Activated CD4-positive, alpha-beta memory T cell treated with anti-CD3 and anti-CD28 coated beads for 36 hours (primary cell): ENCODE measurements at regions of chr2 and their contacts with region 1.

Region 1: GRCh38 chr2:105688946-105689345 is 55.8 kb upstream of the NCK2 start:
- DNase-seq: no peak
- H3K4me3 Mint-ChIP-seq: no peak overlapping the region
- H3K27ac Mint-ChIP-seq: no peak overlapping the region
- H3K4me1 Mint-ChIP-seq: no peaks in the 10 kb centered on the region
- H3K27me3 Mint-ChIP-seq: no peaks in the 10 kb centered on the region

Region 2: DNA sequence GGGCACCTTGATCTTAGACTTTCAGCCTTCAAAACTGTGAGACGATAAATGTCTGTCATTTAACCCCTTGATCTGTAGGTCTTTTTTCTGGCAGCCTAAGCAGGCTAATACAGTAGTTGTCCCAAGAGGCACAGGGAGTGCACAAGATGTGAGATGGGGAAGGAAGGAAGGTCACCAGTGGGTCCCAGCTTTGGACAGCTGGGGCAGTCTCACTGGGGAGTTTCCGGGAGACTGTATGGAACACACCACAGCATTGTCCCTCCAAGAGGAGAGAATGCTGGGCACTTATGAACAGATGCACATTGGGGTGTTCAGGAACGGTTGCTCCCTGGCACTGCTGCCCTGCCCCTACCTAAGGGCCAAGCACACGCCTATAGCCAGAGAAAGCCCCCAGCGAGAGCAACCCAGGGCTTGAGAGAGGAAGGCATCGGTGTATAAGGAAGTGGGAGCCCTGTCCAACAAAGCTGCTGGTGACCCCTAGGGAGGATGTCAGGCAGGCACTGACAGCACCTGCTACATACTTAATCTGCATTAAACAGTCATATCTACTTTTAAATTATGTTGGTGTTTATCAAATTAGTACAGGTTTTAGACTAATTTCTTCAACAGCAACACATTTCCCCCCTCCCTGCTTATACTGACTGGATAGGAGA is 44.1 kb after region 1 on chr2:
- CTCF ChIA-PET with region 1: no interaction called
- POLR2A ChIA-PET with region 1: no interaction called
- intact Hi-C with region 1: loop called (anchors 1 kb)
- DNase-seq: no peak
- H3K4me3 Mint-ChIP-seq: no peak overlapping the region
- H3K27ac Mint-ChIP-seq: peak overlapping the region; percentile 20
- H3K4me1 Mint-ChIP-seq: peaks cover 45% of the 10 kb centered on the region
- H3K27me3 Mint-ChIP-seq: no peaks in the 10 kb centered on the region